ENCODE measurements at regions of chr4 and their contacts with region 1.

Region 1: DNA sequence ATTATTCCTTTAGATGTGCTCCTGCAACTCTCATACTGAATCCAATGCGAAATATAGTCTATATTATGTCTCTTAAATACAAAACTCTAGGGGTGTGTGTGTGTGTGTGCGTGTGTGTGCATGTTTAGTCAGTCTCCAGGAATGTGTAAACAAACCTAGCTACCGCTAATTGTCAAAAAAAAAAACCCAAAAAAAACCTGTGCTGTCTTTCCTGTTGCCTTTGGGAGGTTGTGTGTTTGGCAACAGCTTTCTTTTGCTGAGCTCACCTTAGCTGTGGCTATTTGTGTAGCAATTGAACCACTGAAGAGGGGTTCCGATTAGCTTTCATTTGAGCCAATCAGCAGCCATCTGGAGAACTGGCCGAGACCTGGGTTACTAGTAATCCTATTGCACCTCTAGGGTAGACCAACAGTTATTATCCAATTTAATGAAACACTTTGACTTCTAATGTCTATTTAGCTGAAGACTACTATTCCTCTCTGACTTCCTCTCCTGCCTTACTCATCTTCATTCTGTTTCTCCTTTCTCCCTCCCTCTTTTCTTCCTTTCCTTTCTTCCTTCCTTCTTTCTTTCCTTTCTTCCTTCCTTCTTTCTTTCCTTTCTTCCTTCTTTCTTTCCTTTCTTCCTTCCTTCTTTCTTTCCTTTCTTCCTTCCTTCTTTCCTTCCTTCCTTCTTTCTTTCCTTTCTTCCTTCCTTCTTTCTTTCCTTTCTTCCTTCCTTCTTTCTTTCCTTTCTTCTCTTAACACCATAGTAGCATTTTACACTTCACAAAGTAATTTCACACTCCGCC is 471.1 kb downstream of the GBA3 start:
- DNase-seq: no peak
- H3K4me3 ChIP-seq: no peak overlapping the region
- H3K27ac ChIP-seq: no peak overlapping the region
- H3K4me1 ChIP-seq: peaks cover 5% of the 10 kb centered on the region
- H3K27me3 ChIP-seq: no peaks in the 10 kb centered on the region
- CTCF ChIP-seq: no peak

Region 2: GRCh38 chr4:22695917-22696316 is 467.9 kb before region 1 on chr4:
- dilution Hi-C with region 1: no loop called
- DNase-seq: no peak
- H3K4me3 ChIP-seq: no peak overlapping the region
- H3K27ac ChIP-seq: no peak overlapping the region
- H3K4me1 ChIP-seq: no peaks in the 10 kb centered on the region
- H3K27me3 ChIP-seq: no peaks in the 10 kb centered on the region
- CTCF ChIP-seq: no peak

Region 3: GRCh38 chr4:23237771-23238170 is 73.9 kb after region 1 on chr4:
- dilution Hi-C with region 1: loop called (anchors 5 kb)
- DNase-seq: no peak
- H3K4me3 ChIP-seq: no peak overlapping the region
- H3K27ac ChIP-seq: no peak overlapping the region
- H3K4me1 ChIP-seq: no peaks in the 10 kb centered on the region
- H3K27me3 ChIP-seq: no peaks in the 10 kb centered on the region
- CTCF ChIP-seq: no peak